Motor neuron (in vitro differentiated cells): ENCODE measurements at regions of chr2 and their contacts with region 1.

Region 1: GRCh38 chr2:207746131-207746530 is 23.6 kb downstream of the FZD5 start:
- ATAC-seq: peak; percentile 34 to 86 (median 78)
- H3K4me3 ChIP-seq: no peak overlapping the region
- H3K27ac ChIP-seq: no peak overlapping the region
- H3K4me1 ChIP-seq: peaks cover 10 to 12% of the 10 kb centered on the region in 2 donors

Region 2: DNA sequence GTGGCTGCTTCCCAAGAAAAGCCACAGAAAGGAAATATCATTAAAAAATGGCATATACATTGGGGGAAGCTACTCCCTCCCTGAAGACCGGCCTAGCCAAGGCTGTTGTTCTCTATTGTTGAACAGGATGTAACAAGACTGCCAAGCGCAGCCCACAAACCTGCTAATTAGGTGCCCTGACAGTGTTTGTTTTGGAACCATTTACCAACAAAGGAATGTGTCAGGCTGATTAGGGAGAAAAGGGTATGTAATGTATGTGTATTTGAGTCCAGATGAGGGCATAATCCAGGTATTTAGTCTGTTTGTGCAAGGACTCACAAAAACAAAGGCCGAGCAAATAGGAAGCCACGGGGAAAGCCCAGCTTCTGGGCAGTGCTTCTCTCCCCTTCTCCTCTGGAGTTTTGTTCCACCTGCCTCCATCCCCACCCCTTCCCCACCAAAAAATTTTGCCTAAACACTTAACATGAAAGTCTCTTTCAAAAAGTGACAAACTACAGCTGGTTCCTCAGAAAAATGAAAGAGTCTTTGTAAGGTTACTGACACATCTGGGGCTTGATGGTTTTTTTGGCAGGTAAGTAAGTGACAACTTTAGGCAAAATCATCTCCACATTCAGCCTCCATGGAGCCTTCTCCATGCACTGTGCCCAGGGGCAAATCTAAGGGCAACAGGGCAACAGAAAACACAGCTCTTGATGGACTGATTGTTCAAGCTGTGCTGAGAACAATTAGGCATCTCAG is 101.8 kb after region 1 on chr2:
- in situ Hi-C with region 1: no loop called
- ATAC-seq: peak in 2 of 8 experiments; percentile 75 to 78
- H3K4me3 ChIP-seq: no peak overlapping the region
- H3K27ac ChIP-seq: no peak overlapping the region
- H3K4me1 ChIP-seq: peaks cover 3 to 11% of the 10 kb centered on the region in 2 donors

Region 3: DNA sequence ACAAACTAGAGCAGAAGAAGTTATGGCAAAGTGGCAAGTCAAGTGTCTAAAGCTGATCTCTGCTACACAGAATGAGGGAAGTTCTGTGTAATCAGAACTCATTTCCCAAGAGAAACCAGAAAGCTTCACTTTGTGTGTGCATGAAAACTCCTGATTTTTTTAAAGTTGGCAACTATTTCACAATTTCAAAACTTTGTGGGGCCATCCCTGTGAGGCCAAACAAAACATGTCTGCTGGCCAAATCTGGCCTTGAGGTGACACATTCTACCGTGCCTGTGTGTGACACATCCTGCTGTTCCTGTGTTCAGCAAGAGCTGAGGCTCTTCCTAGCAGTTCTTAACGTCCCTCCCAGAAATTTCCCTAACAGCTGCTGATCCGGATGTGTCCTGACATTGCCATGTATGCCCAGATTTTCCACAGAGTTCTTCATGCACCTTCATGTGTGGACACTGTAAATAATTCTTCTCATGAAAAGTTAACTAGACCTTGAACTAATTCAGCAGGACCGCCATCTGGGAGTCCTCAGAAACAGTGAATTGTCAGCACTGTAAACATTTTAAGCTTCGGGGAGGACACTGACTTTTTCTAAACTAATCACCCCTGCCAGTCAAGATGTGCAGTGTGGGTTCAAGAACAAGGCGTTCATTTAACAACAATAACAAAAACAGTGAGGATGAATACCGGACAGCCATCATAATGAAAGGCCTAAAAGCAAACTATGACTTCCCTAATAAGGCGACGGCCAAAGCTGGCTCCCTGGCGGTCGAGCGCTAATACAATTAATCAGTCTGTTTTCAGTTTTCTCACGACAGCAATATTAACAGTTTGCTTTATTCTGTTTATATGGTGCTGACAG is 180.2 kb after region 1 on chr2:
- in situ Hi-C with region 1: no loop called
- ATAC-seq: peak in 7 of 8 experiments; percentile 76 to 89 (median 85)
- H3K4me3 ChIP-seq: no peak overlapping the region
- H3K27ac ChIP-seq: no peak overlapping the region
- H3K4me1 ChIP-seq: peaks cover 3 to 11% of the 10 kb centered on the region in 2 donors

Region 4: DNA sequence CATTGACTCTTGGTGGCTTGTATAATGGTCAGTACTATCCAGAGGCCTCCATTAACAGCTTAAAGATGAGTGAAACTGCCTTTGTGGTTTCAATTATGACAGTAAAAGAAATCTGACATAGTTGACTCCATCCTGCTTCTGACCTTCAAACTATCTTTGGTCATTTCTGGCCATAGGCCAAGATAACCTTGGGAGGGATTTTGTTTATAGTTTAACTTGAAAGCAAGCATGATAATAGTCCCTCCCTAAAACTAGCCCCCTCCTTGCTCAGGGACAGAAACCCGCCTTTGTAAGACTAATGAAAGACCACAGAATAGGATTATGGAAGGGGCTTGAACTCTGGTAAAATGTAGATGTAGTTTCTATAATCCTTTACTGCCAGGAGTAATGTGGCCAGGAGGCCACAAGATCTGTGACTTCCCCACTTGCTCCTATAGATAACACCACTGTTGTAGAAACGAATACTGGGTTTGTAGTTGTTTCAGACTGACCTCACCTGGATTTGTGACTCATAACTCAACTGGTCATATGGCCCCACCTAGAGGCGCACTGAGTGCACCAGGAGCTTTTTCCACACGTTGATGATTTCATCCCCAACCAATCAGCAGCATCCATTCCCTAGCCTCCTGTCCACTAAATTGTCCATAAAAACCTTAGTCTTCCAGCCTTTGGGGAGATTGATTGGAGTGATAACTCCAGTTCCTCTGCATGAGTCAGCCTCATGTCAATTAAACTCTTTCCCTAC is 287.8 kb after region 1 on chr2:
- in situ Hi-C with region 1: loop called in 5 of 9 experiments (anchors 10 to 25 kb)
- ATAC-seq: peak; percentile 70 to 97 (median 82)
- H3K4me3 ChIP-seq: no peak overlapping the region
- H3K27ac ChIP-seq: no peak overlapping the region
- H3K4me1 ChIP-seq: no peaks in the 10 kb centered on the region

Region 5: GRCh38 chr2:208062113-208062512 is 316.0 kb after region 1 on chr2:
- in situ Hi-C with region 1: loop called in 3 of 9 experiments (anchors 10 to 25 kb)
- ATAC-seq: peak in 4 of 8 experiments; percentile 27 to 82 (median 68)
- H3K4me3 ChIP-seq: no peak overlapping the region
- H3K27ac ChIP-seq: no peak overlapping the region
- H3K4me1 ChIP-seq: no peaks in the 10 kb centered on the region

Region 6: GRCh38 chr2:208072250-208072892 is 326.2 kb after region 1 on chr2:
- in situ Hi-C with region 1: loop called in 4 of 9 experiments (anchors 10 to 25 kb)
- ATAC-seq: peak; percentile 67 to 92 (median 77)
- H3K4me3 ChIP-seq: no peak overlapping the region
- H3K27ac ChIP-seq: no peak overlapping the region
- H3K4me1 ChIP-seq: no peaks in the 10 kb centered on the region